ENCODE measurements at regions of chr14 and their contacts with region 1.

Region 1: GRCh38 chr14:100067971-100068959 is 3.0 kb downstream of the EVL start:
- DNase-seq: peak; percentile 95
- ATAC-seq: peak; percentile 41
- H3K4me3 Mint-ChIP-seq: peak overlapping the region; percentile 89
- H3K27ac Mint-ChIP-seq: peak overlapping the region; percentile 99
- H3K4me1 Mint-ChIP-seq: peaks cover 47% of the 10 kb centered on the region
- H3K27me3 Mint-ChIP-seq: no peaks in the 10 kb centered on the region
- CTCF ChIP-seq: no peak

Region 2: GRCh38 chr14:99971087-99971940 is 97.0 kb before region 1 on chr14:
- CTCF ChIA-PET with region 1: interaction called, 6 read pairs
- POLR2A ChIA-PET with region 1: interaction called, 13 read pairs
- intact Hi-C with region 1: no loop called
- DNase-seq: peak; percentile 87
- ATAC-seq: peak; percentile 90
- H3K4me3 Mint-ChIP-seq: peak overlapping the region; percentile 61
- H3K27ac Mint-ChIP-seq: no peak overlapping the region
- H3K4me1 Mint-ChIP-seq: peaks cover 12% of the 10 kb centered on the region
- H3K27me3 Mint-ChIP-seq: peaks cover 21% of the 10 kb centered on the region
- CTCF ChIP-seq: no peak

Region 3: DNA sequence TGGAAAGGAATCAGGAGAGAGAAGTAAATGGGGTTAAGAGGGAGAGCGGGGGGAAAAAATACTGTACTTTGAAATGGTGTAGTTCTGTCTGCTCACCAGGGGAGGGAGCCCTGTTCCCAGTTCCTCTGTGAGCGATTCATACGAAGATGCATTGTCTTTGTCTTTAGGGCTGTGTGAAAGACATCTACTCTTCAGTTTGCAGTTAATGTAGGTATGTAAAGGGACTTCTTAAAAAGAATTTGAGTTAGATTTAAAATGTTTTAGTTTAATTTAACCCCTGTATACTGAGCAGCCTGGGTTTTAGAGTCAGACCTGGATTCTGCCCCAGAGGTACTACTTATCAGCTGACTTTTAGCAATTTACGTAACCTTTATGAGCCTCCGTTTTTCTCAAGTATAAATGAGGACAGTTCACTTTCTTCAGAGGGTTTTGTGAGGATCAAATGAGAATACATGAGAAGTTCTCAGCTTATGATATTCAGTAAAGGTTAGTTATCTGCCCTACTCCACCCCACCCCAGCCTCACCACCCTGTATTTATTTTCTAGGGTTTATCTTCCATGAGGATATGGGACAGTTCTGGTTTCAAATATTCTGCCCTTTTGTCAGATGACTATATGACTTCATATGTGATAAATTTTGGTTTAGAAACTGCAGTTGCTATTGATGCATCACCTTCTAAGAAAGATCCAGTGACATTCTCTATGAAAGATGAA is 85.6 kb before region 1 on chr14:
- CTCF ChIA-PET with region 1: interaction called, 52 read pairs
- POLR2A ChIA-PET with region 1: interaction called, 4 read pairs
- intact Hi-C with region 1: loop called (anchors 5 kb)
- DNase-seq: peak; percentile 68
- ATAC-seq: peak; percentile 100
- H3K4me3 Mint-ChIP-seq: no peak overlapping the region
- H3K27ac Mint-ChIP-seq: no peak overlapping the region
- H3K4me1 Mint-ChIP-seq: peaks cover 16% of the 10 kb centered on the region
- H3K27me3 Mint-ChIP-seq: no peaks in the 10 kb centered on the region
- CTCF ChIP-seq: peak; percentile 96

Region 4: GRCh38 chr14:100056964-100057795 is 11.1 kb before region 1 on chr14:
- CTCF ChIA-PET with region 1: interaction called, 60 read pairs
- POLR2A ChIA-PET with region 1: interaction called, 521 read pairs
- intact Hi-C with region 1: no loop called
- DNase-seq: peak; percentile 31
- ATAC-seq: peak; percentile 35
- H3K4me3 Mint-ChIP-seq: peak overlapping the region; percentile 43
- H3K27ac Mint-ChIP-seq: peak overlapping the region; percentile 87
- H3K4me1 Mint-ChIP-seq: peaks cover 61% of the 10 kb centered on the region
- H3K27me3 Mint-ChIP-seq: no peaks in the 10 kb centered on the region
- CTCF ChIP-seq: peak; percentile 65

Region 5: GRCh38 chr14:100078991-100079725 is 10.9 kb after region 1 on chr14:
- CTCF ChIA-PET with region 1: interaction called, 170 read pairs
- POLR2A ChIA-PET with region 1: interaction called, 521 read pairs
- intact Hi-C with region 1: loop called (anchors 2 kb)
- DNase-seq: peak; percentile 93
- ATAC-seq: peak; percentile 70
- H3K4me3 Mint-ChIP-seq: peak overlapping the region; percentile 72
- H3K27ac Mint-ChIP-seq: peak overlapping the region; percentile 99
- H3K4me1 Mint-ChIP-seq: peaks cover 95% of the 10 kb centered on the region
- H3K27me3 Mint-ChIP-seq: no peaks in the 10 kb centered on the region
- CTCF ChIP-seq: peak; percentile 27

Region 6: GRCh38 chr14:100239840-100240724 is 171.8 kb after region 1 on chr14:
- CTCF ChIA-PET with region 1: no interaction called
- POLR2A ChIA-PET with region 1: interaction called, 8 read pairs
- intact Hi-C with region 1: loop called (anchors 5 kb)
- DNase-seq: peak; percentile 88
- ATAC-seq: peak; percentile 52
- H3K4me3 Mint-ChIP-seq: peak overlapping the region; percentile 97
- H3K27ac Mint-ChIP-seq: peak overlapping the region; percentile 93
- H3K4me1 Mint-ChIP-seq: peaks cover 45% of the 10 kb centered on the region
- H3K27me3 Mint-ChIP-seq: no peaks in the 10 kb centered on the region
- CTCF ChIP-seq: peak; percentile 77

Region 7: DNA sequence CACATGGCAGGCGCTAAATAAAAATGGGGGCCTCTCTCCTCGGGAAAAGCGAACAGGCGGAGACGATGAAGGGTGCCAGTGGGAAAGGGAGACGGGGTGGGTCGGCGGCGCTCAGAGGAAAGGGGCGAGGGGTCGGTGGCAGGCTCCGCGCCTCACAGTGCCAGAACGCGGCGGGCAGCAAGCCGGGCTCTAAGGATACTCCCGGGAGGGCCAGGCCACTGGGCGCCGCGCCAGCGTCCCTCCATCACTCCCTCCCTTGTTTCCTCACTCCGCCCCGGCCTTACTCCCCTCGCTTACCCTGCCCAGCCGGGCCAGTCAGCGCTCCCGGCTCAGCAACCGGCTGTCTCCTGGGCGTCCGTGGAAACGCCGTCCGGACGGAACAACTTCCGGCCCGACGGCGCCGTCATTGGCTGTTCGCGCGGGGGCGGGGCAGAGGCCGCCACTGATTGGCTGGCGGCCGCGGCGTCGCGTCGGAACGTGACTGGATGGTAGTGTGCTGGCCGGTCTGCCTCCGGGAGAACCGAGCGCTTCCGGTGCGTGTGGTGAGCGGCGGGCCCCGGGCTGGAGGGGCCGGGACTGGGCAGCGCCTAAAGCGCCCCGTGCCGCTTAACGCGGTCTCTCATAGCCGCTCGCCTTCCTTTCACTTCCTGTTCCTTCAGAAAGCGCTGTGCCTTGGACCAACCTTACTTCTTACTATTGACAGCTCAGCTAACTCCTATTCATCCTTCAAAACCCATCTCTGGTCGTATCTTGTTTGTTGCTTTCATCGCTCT is 307.9 kb after region 1 on chr14:
- CTCF ChIA-PET with region 1: no interaction called
- POLR2A ChIA-PET with region 1: interaction called, 5 read pairs
- intact Hi-C with region 1: loop called (anchors 10 kb)
- DNase-seq: peak; percentile 93
- ATAC-seq: peak; percentile 66
- H3K4me3 Mint-ChIP-seq: peak within 1 kb of the TSS; percentile 98
- H3K27ac Mint-ChIP-seq: peak within 1 kb of the TSS; percentile 100
- H3K4me1 Mint-ChIP-seq: peaks cover 37% of the 10 kb centered on the region
- H3K27me3 Mint-ChIP-seq: no peaks in the 10 kb centered on the region
- CTCF ChIP-seq: no peak

Measured in activated CD8-positive, alpha-beta T cell treated with anti-CD3 and anti-CD28 coated beads for 36 hours (primary cell).